ENCODE measurements at regions of chr10 and their contacts with region 1.

Region 1: DNA sequence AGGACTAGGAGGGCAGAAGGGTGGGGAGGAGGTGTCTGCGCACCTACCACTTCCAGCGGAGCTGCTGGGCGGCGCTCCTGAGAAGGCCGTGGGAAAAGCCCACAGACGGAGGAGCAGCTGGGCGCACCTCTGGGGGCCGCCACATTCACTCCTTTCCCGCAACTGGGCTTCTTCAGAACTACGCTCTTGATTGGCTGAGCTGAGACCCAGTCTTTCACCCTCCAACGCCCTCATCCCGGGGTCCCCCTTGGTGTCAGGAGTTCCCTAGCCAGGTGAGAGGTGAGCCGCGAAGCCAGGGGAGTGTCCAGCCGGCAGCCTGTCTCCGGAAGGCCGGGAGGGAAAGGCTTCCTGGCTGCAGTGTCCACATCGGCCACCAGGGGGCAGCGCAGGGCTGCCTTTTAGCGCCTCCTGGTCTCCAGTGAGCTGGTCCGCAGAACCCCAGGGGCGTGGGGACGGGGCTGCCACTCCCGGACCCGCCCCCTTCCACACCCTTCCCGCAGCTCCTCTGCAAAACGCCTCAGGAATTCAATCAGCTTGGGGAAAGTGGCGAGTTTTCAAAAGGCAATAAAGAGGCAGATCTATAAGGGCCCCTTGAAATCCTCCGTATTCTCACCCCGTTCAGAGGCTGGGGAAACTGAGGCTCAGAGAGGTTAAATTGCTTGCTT is 98.8 kb downstream of the CHST15 start:
- DNase-seq: peak; percentile 89
- ATAC-seq: peak; percentile 85
- H3K4me3 Mint-ChIP-seq: peak overlapping the region; percentile 73
- H3K27ac Mint-ChIP-seq: no peak overlapping the region
- H3K4me1 Mint-ChIP-seq: peaks cover 42% of the 10 kb centered on the region
- H3K27me3 Mint-ChIP-seq: peaks cover 38% of the 10 kb centered on the region
- CTCF ChIP-seq: peak; percentile 91

Region 2: GRCh38 chr10:123970927-123971286 is 23.6 kb before region 1 on chr10:
- CTCF ChIA-PET with region 1: no interaction called
- POLR2A ChIA-PET with region 1: no interaction called
- intact Hi-C with region 1: no loop called
- DNase-seq: no peak
- ATAC-seq: no peak
- H3K4me3 Mint-ChIP-seq: no peak overlapping the region
- H3K27ac Mint-ChIP-seq: no peak overlapping the region
- H3K4me1 Mint-ChIP-seq: peaks cover 4% of the 10 kb centered on the region
- H3K27me3 Mint-ChIP-seq: peaks cover 73% of the 10 kb centered on the region
- CTCF ChIP-seq: no peak

Region 3: DNA sequence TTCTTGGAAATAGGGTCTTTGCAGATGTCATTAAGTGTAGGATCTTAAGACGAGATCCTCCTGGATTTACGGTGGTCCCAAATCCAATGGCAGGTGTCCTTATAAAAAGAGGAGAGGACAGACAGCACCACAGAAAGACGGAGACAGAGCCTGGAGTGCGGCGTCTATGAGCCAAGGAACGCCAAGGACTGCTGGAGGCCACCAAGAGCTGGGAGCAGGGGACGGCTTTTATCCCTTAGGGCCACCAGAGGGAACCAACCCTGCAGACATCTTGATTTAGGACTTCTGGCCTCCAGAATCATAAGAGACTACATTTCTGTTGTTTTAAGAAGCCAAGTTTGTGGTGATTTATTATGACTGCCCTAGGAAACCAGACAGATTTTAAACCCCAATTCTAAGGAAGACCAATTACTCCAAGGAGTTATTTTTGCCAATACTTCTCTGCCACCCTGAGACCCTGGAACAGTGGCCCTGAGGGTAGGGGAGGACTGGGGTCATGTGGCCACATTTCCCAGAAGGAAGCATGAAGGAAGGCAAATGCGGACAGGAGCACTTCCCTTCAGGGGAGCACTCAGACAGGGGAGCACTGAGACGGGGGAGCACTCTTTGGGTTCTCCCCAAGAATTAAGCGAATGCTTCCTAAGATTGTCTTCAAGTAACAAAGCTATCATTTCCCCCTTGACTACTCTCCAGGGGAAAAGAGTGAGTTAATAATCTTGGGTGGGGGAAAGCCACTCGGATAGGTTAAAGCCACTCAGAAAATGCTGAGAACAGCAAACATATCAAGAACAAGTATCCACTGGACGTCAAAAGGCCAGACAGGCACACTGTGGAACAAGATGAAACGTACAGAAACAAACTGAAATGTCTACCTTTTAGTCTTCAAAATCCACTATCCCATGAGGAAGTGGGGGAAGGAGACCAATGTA is 31.4 kb after region 1 on chr10:
- CTCF ChIA-PET with region 1: interaction called, 10 read pairs
- POLR2A ChIA-PET with region 1: no interaction called
- intact Hi-C with region 1: loop called (anchors 2 kb)
- DNase-seq: no peak
- ATAC-seq: peak; percentile 57
- H3K4me3 Mint-ChIP-seq: no peak overlapping the region
- H3K27ac Mint-ChIP-seq: no peak overlapping the region
- H3K4me1 Mint-ChIP-seq: peaks cover 11% of the 10 kb centered on the region
- H3K27me3 Mint-ChIP-seq: no peaks in the 10 kb centered on the region
- CTCF ChIP-seq: no peak

Region 4: GRCh38 chr10:124106241-124106879 is 111.8 kb after region 1 on chr10:
- CTCF ChIA-PET with region 1: interaction called, 12 read pairs
- POLR2A ChIA-PET with region 1: no interaction called
- intact Hi-C with region 1: no loop called
- DNase-seq: no peak
- ATAC-seq: peak; percentile 91
- H3K4me3 Mint-ChIP-seq: peak overlapping the region; percentile 69
- H3K27ac Mint-ChIP-seq: peak overlapping the region; percentile 81
- H3K4me1 Mint-ChIP-seq: peaks cover 75% of the 10 kb centered on the region
- H3K27me3 Mint-ChIP-seq: no peaks in the 10 kb centered on the region
- CTCF ChIP-seq: no peak

Region 5: GRCh38 chr10:124221356-124222317 is 227.1 kb after region 1 on chr10:
- CTCF ChIA-PET with region 1: interaction called, 12 read pairs
- POLR2A ChIA-PET with region 1: no interaction called
- intact Hi-C with region 1: loop called (anchors 1 kb)
- DNase-seq: no peak
- ATAC-seq: peak; percentile 16
- H3K4me3 Mint-ChIP-seq: peak overlapping the region; percentile 74
- H3K27ac Mint-ChIP-seq: no peak overlapping the region
- H3K4me1 Mint-ChIP-seq: peaks cover 33% of the 10 kb centered on the region
- H3K27me3 Mint-ChIP-seq: no peaks in the 10 kb centered on the region
- CTCF ChIP-seq: no peak

Region 6: DNA sequence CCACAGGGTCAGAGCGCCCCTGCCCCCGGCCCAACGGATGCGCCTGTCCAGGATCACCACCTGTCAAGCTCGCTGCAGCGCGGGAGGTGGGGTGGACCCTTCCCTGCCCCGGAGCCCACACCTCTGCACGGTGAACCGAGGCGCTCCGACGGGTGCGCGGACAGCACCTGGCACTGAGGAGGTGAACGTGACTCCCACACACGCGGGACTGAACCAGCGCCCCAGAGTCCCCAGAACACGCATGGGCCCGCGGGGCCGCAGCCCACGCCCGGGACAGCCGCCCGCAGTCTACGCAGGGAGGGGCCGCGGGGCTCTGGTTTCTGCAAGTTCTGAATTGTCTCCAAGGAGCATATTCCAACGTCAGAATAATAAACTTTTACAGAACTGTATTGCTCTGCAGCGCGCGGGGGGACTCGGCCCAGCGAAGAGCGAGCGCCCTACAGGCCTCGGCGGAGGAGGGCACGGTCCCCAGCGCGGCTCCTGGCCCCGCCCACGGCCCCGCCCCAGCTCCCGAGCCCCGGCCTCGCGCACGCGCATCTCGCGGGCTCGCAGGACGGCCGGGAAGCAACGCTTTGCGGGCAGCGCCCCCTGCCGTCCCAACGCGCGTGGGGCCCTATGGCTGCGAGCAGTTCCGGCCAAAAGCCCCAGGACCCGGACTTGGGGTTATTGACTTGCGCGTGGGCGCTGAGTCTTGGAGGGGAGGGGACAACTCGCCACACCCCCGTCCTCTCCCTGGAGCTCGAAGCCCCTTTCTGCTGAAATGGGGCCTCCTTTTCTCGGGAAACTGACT is 394.5 kb after region 1 on chr10:
- CTCF ChIA-PET with region 1: interaction called, 287 read pairs
- POLR2A ChIA-PET with region 1: interaction called, 14 read pairs
- intact Hi-C with region 1: loop called (anchors 1 kb)
- DNase-seq: peak; percentile 97
- ATAC-seq: peak; percentile 99
- H3K4me3 Mint-ChIP-seq: peak overlapping the region; percentile 58
- H3K27ac Mint-ChIP-seq: no peak overlapping the region
- H3K4me1 Mint-ChIP-seq: peaks cover 3% of the 10 kb centered on the region
- H3K27me3 Mint-ChIP-seq: peaks cover 7% of the 10 kb centered on the region
- CTCF ChIP-seq: peak; percentile 86

Region 7: DNA sequence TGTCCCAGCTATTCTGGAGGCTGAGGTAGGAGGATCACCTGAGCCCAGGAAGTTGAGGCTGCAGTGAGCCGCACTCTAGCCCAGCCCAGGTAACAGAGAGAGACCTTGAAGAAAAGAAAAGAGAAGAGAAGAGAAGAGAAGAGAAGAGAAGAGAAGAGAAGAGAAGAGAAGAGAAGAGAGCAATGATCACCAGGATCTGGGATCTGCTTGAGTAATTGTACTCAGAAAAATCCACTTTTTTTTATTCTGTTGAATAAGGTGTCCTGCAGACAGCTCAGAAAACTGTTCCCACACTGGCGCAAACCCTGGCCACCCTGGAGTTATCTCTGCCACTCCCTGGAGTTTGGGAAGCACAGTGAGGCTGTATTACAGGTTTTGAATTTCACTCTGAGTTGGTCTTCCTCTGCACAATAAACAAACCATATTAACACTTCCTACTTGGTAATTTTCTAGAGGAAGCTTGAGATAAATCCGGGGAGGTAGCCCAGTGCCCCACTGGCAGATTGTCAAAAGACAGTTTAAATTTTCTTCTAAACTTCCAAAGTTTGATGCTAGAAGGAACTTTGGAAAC is 433.7 kb after region 1 on chr10:
- CTCF ChIA-PET with region 1: no interaction called
- POLR2A ChIA-PET with region 1: no interaction called
- intact Hi-C with region 1: no loop called
- DNase-seq: no peak
- ATAC-seq: no peak
- H3K4me3 Mint-ChIP-seq: no peak overlapping the region
- H3K27ac Mint-ChIP-seq: no peak overlapping the region
- H3K4me1 Mint-ChIP-seq: no peaks in the 10 kb centered on the region
- H3K27me3 Mint-ChIP-seq: peaks cover 33% of the 10 kb centered on the region
- CTCF ChIP-seq: no peak

Region 8: GRCh38 chr10:124530215-124530665 is 535.7 kb after region 1 on chr10:
- CTCF ChIA-PET with region 1: interaction called, 7 read pairs
- POLR2A ChIA-PET with region 1: no interaction called
- intact Hi-C with region 1: loop called (anchors 5 kb)
- DNase-seq: peak; percentile 86
- ATAC-seq: peak; percentile 91
- H3K4me3 Mint-ChIP-seq: no peak overlapping the region
- H3K27ac Mint-ChIP-seq: peak overlapping the region; percentile 71
- H3K4me1 Mint-ChIP-seq: peaks cover 56% of the 10 kb centered on the region
- H3K27me3 Mint-ChIP-seq: no peaks in the 10 kb centered on the region
- CTCF ChIP-seq: no peak

Measured in activated B cell treated with CpG ODN at 0.5 μM for 24 hours (primary cell).